ENCODE measurements at regions of chr4 and their contacts with region 1.

Region 1: GRCh38 chr4:40309250-40309774 is 25.8 kb upstream of the CHRNA9 start:
- DNase-seq: peak; percentile 82 to 96 (median 91)
- ATAC-seq: peak; percentile 62
- H3K4me3 ChIP-seq: peak overlapping the region; percentile 36
- H3K4me3 Mint-ChIP-seq: peak overlapping the region; percentile 85
- H3K27ac ChIP-seq: peak overlapping the region; percentile 86 to 93
- H3K27ac Mint-ChIP-seq: peak overlapping the region; percentile 99
- H3K4me1 ChIP-seq: peaks cover 81% of the 10 kb centered on the region
- H3K4me1 Mint-ChIP-seq: peaks cover 87% of the 10 kb centered on the region
- H3K27me3 ChIP-seq: no peaks in the 10 kb centered on the region
- H3K27me3 Mint-ChIP-seq: no peaks in the 10 kb centered on the region
- CTCF ChIP-seq: peak; percentile 93

Region 2: GRCh38 chr4:40193016-40193571 is 116.2 kb before region 1 on chr4:
- CTCF ChIA-PET with region 1: interaction called, 4 read pairs
- POLR2A ChIA-PET with region 1: interaction called, 73 read pairs
- intact Hi-C with region 1: loop called in 1 of 2 experiments (anchors 1 kb)
- DNase-seq: peak in 8 of 14 experiments; percentile 43 to 79 (median 51)
- ATAC-seq: peak; percentile 25
- H3K4me3 ChIP-seq: peak overlapping the region; percentile 74
- H3K4me3 Mint-ChIP-seq: peak overlapping the region; percentile 94
- H3K27ac ChIP-seq: peak overlapping the region; percentile 67 to 99
- H3K27ac Mint-ChIP-seq: peak overlapping the region; percentile 99
- H3K4me1 ChIP-seq: peaks cover 43% of the 10 kb centered on the region
- H3K4me1 Mint-ChIP-seq: peaks cover 72% of the 10 kb centered on the region
- H3K27me3 ChIP-seq: no peaks in the 10 kb centered on the region
- H3K27me3 Mint-ChIP-seq: peaks cover 5% of the 10 kb centered on the region
- CTCF ChIP-seq: no peak

Region 3: DNA sequence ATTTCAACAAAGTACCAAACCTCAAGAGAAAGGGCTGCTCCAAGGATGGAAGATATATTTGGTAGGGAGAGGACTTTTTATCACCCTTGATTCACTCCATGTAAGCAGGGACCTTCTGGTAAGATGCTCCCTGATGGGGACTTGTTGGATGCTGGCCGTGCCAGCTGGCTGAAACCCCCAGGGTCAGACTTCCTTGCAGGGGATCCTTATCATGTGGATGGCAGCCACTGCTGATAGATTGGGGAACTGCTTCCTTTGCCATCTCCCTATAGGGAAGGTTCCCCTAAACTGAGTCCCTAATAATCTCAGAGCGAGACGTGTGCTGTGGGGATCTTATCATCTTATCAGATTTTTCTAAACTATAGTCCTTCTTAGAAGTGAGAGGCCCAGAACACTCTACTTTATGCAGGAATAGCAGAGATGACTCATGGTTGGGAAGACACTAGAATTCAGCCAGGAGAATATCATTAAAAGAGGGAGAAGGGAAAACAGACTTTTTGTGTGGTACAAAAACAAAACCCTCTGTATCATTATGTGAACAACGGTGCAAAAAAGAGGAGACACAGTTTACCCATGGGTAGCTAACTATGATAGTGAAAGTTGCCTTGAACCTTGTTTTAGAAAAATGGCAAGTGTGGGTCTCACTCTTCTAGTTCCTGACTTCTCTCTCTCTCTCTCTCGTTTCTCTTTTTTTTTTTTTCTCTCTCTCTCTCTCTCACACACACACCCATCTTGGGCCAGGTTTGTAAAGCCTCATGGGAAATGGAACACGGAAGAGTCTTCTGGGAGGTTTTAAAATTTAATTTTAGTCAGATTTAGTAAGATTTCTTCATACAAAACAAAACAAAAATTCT is 96.4 kb before region 1 on chr4:
- CTCF ChIA-PET with region 1: interaction called, 4 read pairs
- POLR2A ChIA-PET with region 1: interaction called, 98 read pairs
- intact Hi-C with region 1: no loop called
- DNase-seq: peak in 1 of 14 experiments; percentile 26
- ATAC-seq: no peak
- H3K4me3 ChIP-seq: peak overlapping the region; percentile 25
- H3K4me3 Mint-ChIP-seq: peak overlapping the region; percentile 71
- H3K27ac ChIP-seq: peak overlapping the region; percentile 73 to 85
- H3K27ac Mint-ChIP-seq: peak overlapping the region; percentile 99
- H3K4me1 ChIP-seq: peaks cover 74% of the 10 kb centered on the region
- H3K4me1 Mint-ChIP-seq: peaks cover 94% of the 10 kb centered on the region
- H3K27me3 ChIP-seq: no peaks in the 10 kb centered on the region
- H3K27me3 Mint-ChIP-seq: no peaks in the 10 kb centered on the region
- CTCF ChIP-seq: no peak

Region 4: DNA sequence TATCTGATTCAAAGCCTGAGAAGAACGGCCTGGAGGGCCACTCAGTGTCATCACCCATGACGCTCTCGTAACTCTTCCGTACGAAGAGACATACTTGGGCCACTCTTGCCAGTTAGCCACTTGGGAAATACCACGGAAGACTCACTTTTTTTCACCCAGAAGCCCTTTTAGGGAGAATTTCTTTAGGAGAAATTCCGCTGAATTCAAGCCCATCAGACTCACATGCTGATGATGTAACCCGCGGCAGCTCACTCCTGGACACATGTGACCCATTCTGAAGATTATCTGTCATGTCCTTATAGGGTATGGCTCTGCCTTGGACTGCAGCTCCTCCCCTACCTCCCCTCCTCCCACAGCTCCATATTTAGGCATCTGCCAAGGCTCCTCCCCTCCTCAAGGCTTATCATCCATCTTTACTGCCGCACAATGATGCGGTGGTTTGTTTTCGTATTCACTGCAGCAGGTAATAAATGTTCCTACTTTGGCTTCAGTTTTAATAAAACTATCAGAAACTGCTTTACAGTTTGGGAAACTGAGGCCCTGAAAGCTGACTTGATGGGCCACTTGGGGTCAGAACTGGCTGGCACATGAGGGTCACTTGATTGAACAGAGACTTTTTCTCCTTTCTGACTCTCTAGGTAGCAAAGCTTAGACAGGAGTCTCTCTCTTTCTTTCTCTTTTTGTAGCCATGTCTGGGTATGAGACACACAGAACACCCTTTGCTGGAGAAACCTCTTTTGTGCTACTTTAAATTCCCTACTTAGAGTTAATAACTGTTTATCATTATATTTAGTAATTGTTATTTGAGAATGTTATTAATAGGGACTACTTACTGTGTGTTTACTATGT is 70.4 kb before region 1 on chr4:
- CTCF ChIA-PET with region 1: interaction called, 10 read pairs
- POLR2A ChIA-PET with region 1: interaction called, 25 read pairs
- intact Hi-C with region 1: loop called in 1 of 2 experiments (anchors 5 kb)
- DNase-seq: peak; percentile 50 to 95 (median 69)
- ATAC-seq: peak; percentile 93
- H3K4me3 ChIP-seq: peak overlapping the region; percentile 46
- H3K4me3 Mint-ChIP-seq: peak overlapping the region; percentile 55
- H3K27ac ChIP-seq: peak overlapping the region; percentile 79 to 97
- H3K27ac Mint-ChIP-seq: peak overlapping the region; percentile 93
- H3K4me1 ChIP-seq: peaks cover 99% of the 10 kb centered on the region
- H3K4me1 Mint-ChIP-seq: peaks cover 92% of the 10 kb centered on the region
- H3K27me3 ChIP-seq: no peaks in the 10 kb centered on the region
- H3K27me3 Mint-ChIP-seq: no peaks in the 10 kb centered on the region
- CTCF ChIP-seq: no peak

Region 5: DNA sequence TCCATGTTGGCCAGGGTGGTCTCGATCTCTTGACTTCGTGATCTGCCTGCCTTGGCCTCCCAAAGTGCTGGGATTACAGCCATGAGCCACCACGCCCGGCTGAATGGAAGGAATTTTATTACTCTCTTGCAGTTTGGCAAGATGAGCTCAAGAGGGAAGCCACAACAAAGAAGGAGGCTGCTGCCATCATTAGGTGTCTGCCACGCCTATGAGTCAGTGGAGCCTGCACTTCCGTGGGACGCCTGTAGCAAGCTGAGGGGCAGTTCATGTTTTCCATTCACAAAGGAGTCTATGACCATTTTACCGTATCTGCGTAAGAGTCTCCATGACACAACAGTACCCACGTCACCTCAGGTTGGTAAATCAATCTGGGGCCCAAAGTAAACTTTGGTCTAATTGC is 25.3 kb before region 1 on chr4:
- CTCF ChIA-PET with region 1: interaction called, 72 read pairs
- POLR2A ChIA-PET with region 1: interaction called, 43 read pairs
- intact Hi-C with region 1: loop called in 1 of 2 experiments (anchors 1 kb)
- DNase-seq: peak; percentile 58 to 93 (median 78)
- ATAC-seq: peak; percentile 97
- H3K4me3 ChIP-seq: no peak overlapping the region
- H3K4me3 Mint-ChIP-seq: peak overlapping the region; percentile 82
- H3K27ac ChIP-seq: peak overlapping the region; percentile 33 to 60
- H3K27ac Mint-ChIP-seq: peak overlapping the region; percentile 85
- H3K4me1 ChIP-seq: peaks cover 47% of the 10 kb centered on the region
- H3K4me1 Mint-ChIP-seq: peaks cover 76% of the 10 kb centered on the region
- H3K27me3 ChIP-seq: no peaks in the 10 kb centered on the region
- H3K27me3 Mint-ChIP-seq: no peaks in the 10 kb centered on the region
- CTCF ChIP-seq: peak; percentile 49